CD8-positive, alpha-beta T cell (primary cell): ENCODE measurements at regions of chr14 and their contacts with region 1.

Region 1: DNA sequence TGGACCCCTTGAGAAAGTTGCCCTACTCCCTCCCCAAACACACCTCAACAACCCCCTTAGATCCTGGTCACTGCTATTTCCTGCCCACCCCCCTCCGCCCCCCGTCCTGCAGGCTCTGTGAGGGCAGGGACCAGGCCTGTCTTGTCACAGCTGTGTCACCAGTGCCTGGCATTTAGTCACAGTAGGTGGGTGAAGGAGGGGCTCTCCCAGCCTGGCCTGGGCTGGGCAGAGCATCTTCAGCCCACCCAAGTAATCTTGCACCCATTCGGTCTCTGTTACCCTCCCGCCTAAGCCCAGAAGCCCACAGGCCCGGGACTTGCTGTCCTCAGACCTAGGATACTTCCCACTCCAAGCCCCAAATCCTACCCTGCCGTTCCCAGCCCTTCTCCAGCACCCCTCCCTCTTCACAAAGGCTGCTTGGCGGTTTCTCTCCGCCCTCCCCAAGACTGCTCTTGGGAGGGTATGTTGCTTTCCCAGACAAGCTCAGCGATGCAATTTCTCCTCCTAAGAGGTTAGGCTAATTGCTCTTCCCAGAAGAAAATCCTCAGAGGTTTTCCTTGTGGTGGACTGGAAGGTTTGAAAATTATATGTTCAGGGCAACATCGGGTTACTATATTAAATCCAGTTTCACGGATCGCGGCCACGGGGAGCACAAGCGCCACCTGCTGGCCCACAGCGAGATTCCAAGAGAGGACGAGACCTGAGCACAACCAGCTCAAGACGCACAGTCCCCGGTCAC is 50.8 kb upstream of the ZFP36L1 start:
- DNase-seq: peak; percentile 48 to 85 (median 77)
- ATAC-seq: peak; percentile 89
- H3K4me3 ChIP-seq: no peak overlapping the region
- H3K4me3 Mint-ChIP-seq: peak overlapping the region; percentile 53
- H3K27ac ChIP-seq: no peak overlapping the region
- H3K27ac Mint-ChIP-seq: no peak overlapping the region
- H3K4me1 ChIP-seq: peaks cover 17% of the 10 kb centered on the region
- H3K4me1 Mint-ChIP-seq: peaks cover 20% of the 10 kb centered on the region
- H3K27me3 ChIP-seq: no peaks in the 10 kb centered on the region
- H3K27me3 Mint-ChIP-seq: no peaks in the 10 kb centered on the region
- CTCF ChIP-seq: peak; percentile 89

Region 2: GRCh38 chr14:67837011-67837624 is 1006.5 kb before region 1 on chr14:
- CTCF ChIA-PET with region 1: interaction called, 28 read pairs
- POLR2A ChIA-PET with region 1: no interaction called
- intact Hi-C with region 1: loop called (anchors 2 kb)
- DNase-seq: peak in 7 of 9 experiments; percentile 41 to 85 (median 60)
- ATAC-seq: peak; percentile 62
- H3K4me3 ChIP-seq: no peak overlapping the region
- H3K4me3 Mint-ChIP-seq: no peak overlapping the region
- H3K27ac ChIP-seq: no peak overlapping the region
- H3K27ac Mint-ChIP-seq: no peak overlapping the region
- H3K4me1 ChIP-seq: no peaks in the 10 kb centered on the region
- H3K4me1 Mint-ChIP-seq: peaks cover 5% of the 10 kb centered on the region
- H3K27me3 ChIP-seq: no peaks in the 10 kb centered on the region
- H3K27me3 Mint-ChIP-seq: no peaks in the 10 kb centered on the region
- CTCF ChIP-seq: peak; percentile 69

Region 3: DNA sequence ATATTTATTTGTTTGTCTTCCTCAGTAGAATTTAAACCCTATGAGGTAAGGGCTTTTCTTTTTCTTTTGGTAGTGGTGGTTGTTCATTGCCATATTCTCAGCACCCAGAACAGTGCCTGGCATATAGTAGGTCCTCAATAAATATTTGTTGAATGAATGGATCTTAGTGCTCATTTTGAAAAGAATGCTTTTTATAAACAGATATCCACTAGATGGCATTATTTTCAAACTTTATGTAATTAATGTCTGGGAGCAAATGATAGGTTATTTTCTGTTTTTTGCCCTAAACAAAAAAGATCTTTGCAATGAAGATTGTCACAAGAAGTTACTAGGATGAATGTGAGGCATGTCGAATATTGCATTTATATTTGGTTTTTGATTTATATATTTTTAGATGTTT is 959.9 kb before region 1 on chr14:
- CTCF ChIA-PET with region 1: interaction called, 7 read pairs
- POLR2A ChIA-PET with region 1: no interaction called
- intact Hi-C with region 1: loop called (anchors 2 kb)
- DNase-seq: peak in 2 of 9 experiments; percentile 6 to 29
- ATAC-seq: no peak
- H3K4me3 ChIP-seq: no peak overlapping the region
- H3K4me3 Mint-ChIP-seq: no peak overlapping the region
- H3K27ac ChIP-seq: no peak overlapping the region
- H3K27ac Mint-ChIP-seq: no peak overlapping the region
- H3K4me1 ChIP-seq: peaks cover 9% of the 10 kb centered on the region
- H3K4me1 Mint-ChIP-seq: peaks cover 29% of the 10 kb centered on the region
- H3K27me3 ChIP-seq: no peaks in the 10 kb centered on the region
- H3K27me3 Mint-ChIP-seq: no peaks in the 10 kb centered on the region
- CTCF ChIP-seq: no peak

Region 4: GRCh38 chr14:67934008-67934481 is 909.6 kb before region 1 on chr14:
- CTCF ChIA-PET with region 1: interaction called, 41 read pairs
- POLR2A ChIA-PET with region 1: no interaction called
- intact Hi-C with region 1: loop called (anchors 1 to 2 kb)
- DNase-seq: peak in 2 of 9 experiments; percentile 48 to 67
- ATAC-seq: peak; percentile 57
- H3K4me3 ChIP-seq: no peak overlapping the region
- H3K4me3 Mint-ChIP-seq: no peak overlapping the region
- H3K27ac ChIP-seq: no peak overlapping the region
- H3K27ac Mint-ChIP-seq: no peak overlapping the region
- H3K4me1 ChIP-seq: peaks cover 5% of the 10 kb centered on the region
- H3K4me1 Mint-ChIP-seq: peaks cover 7% of the 10 kb centered on the region
- H3K27me3 ChIP-seq: no peaks in the 10 kb centered on the region
- H3K27me3 Mint-ChIP-seq: no peaks in the 10 kb centered on the region
- CTCF ChIP-seq: peak; percentile 63

Region 5: DNA sequence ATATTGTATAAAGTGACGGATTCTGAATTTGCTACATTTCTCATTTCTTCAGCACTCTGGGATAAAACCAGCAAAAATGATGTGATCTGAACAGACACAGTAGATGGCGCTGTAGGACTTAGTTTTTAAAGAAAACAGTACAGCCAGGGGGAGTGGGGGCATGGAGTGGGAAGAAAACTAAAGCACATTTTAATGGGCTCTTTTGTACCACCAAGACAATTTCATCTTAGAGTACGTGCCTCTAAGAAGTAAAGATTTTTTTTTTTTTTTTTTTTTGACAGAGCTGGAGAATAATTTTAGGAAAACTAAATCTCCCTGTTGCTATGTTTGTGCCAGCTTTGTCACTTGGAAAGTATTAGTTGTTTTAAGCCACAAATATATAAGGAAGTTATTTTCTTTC is 899.7 kb before region 1 on chr14:
- CTCF ChIA-PET with region 1: interaction called, 35 read pairs
- POLR2A ChIA-PET with region 1: no interaction called
- intact Hi-C with region 1: loop called (anchors 1 kb)
- DNase-seq: peak in 7 of 9 experiments; percentile 3 to 77 (median 49)
- ATAC-seq: peak; percentile 69
- H3K4me3 ChIP-seq: no peak overlapping the region
- H3K4me3 Mint-ChIP-seq: no peak overlapping the region
- H3K27ac ChIP-seq: no peak overlapping the region
- H3K27ac Mint-ChIP-seq: no peak overlapping the region
- H3K4me1 ChIP-seq: no peaks in the 10 kb centered on the region
- H3K4me1 Mint-ChIP-seq: no peaks in the 10 kb centered on the region
- H3K27me3 ChIP-seq: no peaks in the 10 kb centered on the region
- H3K27me3 Mint-ChIP-seq: no peaks in the 10 kb centered on the region
- CTCF ChIP-seq: peak; percentile 80

Region 6: DNA sequence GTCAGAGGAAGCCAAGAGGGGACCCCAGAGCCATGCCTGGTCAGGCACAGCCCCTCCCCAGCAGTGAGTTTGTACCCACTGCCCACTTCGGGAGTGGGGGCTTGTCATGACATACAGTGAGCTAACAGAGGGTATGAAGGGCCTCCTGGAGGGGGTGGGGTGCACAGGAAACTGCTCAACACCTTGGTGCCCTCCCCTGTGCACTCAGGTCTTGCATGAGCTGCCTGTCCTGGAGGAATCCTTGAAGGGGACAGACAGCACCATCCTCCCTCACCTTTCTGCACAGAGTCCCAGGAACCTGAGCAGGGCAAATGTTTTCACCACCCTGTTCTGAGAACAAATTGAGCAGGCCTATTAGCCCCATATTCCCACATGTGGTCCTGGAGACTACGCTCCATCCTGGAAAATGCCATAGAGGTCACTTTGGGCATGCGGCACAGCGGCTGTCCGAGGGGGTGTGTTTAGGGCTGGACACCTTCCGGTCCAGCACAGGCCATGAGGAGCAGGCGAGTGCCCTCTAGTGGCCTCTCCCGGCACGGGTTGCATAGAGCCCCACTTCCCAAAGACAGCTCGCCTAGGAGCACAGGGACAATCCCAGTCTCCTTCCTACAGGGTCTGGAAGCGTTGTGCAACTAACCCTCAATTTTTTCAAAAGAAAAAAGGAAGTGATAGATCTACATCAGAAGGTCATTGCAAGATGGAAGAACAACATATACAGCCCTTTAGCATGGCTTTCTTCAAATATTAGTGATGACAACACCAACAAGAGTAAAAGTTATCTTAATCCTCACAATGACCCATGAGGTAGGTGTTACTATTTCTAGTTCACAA is 18.9 kb before region 1 on chr14:
- CTCF ChIA-PET with region 1: interaction called, 47 read pairs
- POLR2A ChIA-PET with region 1: interaction called, 3 read pairs
- intact Hi-C with region 1: no loop called
- DNase-seq: peak in 3 of 9 experiments; percentile 43 to 55 (median 48)
- ATAC-seq: no peak
- H3K4me3 ChIP-seq: no peak overlapping the region
- H3K4me3 Mint-ChIP-seq: no peak overlapping the region
- H3K27ac ChIP-seq: no peak overlapping the region
- H3K27ac Mint-ChIP-seq: no peak overlapping the region
- H3K4me1 ChIP-seq: peaks cover 23% of the 10 kb centered on the region
- H3K4me1 Mint-ChIP-seq: peaks cover 33% of the 10 kb centered on the region
- H3K27me3 ChIP-seq: no peaks in the 10 kb centered on the region
- H3K27me3 Mint-ChIP-seq: no peaks in the 10 kb centered on the region
- CTCF ChIP-seq: peak; percentile 52